A673 (cell line): ENCODE measurements at regions of chr15 and their contacts with region 1.

Region 1: GRCh38 chr15:68195336-68196112 is 9.6 kb downstream of the CALML4 start:
- DNase-seq: no peak
- H3K4me3 ChIP-seq: no peak overlapping the region
- H3K27ac ChIP-seq: no peak overlapping the region
- H3K4me1 ChIP-seq: peaks cover 13% of the 10 kb centered on the region
- H3K27me3 ChIP-seq: no peaks in the 10 kb centered on the region
- CTCF ChIP-seq: no peak

Region 2: DNA sequence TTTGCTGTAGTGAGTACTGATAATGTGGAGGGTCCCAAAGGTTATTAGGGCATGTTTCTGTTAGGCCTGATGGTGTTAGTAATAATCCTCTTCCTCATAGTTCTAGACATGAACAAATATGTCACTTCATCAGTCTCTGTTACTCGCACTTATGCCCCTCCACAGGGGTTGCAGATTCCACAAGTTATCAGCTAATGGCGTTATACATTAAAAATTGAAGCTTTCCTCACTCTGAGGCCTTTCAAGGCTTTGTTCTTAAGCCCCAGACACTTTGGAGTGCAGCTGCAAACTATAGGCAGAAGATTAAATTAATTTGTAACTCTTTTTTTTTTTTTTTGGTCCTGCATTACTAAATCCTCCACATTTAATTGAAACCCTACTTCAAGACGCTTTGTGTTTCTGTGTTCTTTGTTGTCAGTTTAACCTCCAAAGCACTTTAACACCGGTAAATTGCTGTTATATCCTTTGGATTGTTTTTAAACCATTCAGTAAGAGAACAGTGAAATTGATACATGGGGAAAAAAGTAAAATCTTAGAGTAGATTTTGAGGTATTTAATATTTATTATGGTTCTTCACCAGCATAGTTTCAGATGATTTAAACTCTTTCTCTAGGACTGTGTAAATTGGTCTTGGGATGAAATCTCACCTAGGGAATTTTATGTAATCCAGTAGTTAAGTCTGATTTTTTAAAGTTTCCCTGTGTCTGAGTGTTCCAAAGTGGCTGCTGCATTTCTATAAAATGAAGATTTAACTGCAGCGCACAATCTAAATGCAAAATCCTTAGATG is 473.3 kb before region 1 on chr15:
- CTCF ChIA-PET with region 1: no interaction called
- POLR2A ChIA-PET with region 1: interaction called, 11 read pairs
- intact Hi-C with region 1: no loop called
- DNase-seq: peak; percentile 32
- H3K4me3 ChIP-seq: no peak overlapping the region
- H3K27ac ChIP-seq: no peak overlapping the region
- H3K4me1 ChIP-seq: peaks cover 23% of the 10 kb centered on the region
- H3K27me3 ChIP-seq: no peaks in the 10 kb centered on the region
- CTCF ChIP-seq: no peak

Region 3: DNA sequence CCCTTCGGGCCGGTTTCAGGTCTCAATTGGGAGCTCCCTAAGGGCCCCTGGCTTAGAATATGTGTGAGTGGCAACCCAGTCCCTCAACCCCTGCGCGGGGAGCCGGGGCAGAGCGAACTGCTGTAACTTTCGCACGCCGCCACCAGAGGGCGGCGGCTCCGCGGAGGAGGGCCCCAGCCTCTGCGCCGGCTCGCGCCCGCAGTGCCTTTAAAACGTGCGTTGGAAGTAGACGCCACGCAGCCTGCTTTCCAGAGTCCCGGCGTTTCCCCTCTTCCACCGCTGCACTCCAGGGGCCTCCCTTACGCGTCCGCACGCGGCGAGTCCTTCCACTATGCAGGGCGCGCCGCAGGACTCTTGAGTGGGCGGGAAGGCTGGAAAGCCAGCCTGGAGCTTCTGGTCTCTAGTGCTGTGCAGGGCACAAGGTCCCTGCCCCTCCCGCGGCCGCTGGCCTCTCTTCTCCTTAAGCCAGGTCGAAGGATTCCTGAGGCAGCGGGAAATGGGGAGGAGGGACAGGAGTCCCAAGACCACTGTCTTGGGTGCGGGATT is 332.0 kb before region 1 on chr15:
- CTCF ChIA-PET with region 1: no interaction called
- POLR2A ChIA-PET with region 1: no interaction called
- intact Hi-C with region 1: loop called (anchors 5 kb)
- DNase-seq: peak; percentile 91
- H3K4me3 ChIP-seq: peak overlapping the region; percentile 38
- H3K27ac ChIP-seq: no peak overlapping the region
- H3K4me1 ChIP-seq: no peaks in the 10 kb centered on the region
- H3K27me3 ChIP-seq: no peaks in the 10 kb centered on the region
- CTCF ChIP-seq: peak; percentile 97

Region 4: DNA sequence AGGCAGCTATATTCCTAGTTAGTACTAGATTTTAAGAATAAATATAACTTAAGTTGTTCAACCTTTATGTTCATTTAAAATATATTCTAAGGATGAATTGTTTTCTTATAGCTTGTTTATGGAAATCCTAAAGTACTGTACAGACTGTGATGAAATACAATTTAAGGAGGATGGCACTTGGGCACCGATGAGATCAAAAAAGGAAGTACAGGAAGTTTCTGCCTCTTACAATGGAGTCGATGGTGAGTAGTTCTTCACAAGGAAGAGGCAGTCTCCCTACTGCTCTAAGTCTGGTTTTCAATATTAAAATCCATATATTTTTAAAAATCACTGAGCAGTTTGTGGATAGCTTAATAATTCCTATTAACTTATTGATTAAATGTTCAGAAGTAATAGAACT is 20.0 kb before region 1 on chr15:
- CTCF ChIA-PET with region 1: no interaction called
- POLR2A ChIA-PET with region 1: no interaction called
- intact Hi-C with region 1: no loop called
- DNase-seq: no peak
- H3K4me3 ChIP-seq: no peak overlapping the region
- H3K27ac ChIP-seq: no peak overlapping the region
- H3K4me1 ChIP-seq: no peaks in the 10 kb centered on the region
- H3K27me3 ChIP-seq: no peaks in the 10 kb centered on the region
- CTCF ChIP-seq: no peak